ENCODE measurements at regions of chr1 and their contacts with region 1.

Region 1: DNA sequence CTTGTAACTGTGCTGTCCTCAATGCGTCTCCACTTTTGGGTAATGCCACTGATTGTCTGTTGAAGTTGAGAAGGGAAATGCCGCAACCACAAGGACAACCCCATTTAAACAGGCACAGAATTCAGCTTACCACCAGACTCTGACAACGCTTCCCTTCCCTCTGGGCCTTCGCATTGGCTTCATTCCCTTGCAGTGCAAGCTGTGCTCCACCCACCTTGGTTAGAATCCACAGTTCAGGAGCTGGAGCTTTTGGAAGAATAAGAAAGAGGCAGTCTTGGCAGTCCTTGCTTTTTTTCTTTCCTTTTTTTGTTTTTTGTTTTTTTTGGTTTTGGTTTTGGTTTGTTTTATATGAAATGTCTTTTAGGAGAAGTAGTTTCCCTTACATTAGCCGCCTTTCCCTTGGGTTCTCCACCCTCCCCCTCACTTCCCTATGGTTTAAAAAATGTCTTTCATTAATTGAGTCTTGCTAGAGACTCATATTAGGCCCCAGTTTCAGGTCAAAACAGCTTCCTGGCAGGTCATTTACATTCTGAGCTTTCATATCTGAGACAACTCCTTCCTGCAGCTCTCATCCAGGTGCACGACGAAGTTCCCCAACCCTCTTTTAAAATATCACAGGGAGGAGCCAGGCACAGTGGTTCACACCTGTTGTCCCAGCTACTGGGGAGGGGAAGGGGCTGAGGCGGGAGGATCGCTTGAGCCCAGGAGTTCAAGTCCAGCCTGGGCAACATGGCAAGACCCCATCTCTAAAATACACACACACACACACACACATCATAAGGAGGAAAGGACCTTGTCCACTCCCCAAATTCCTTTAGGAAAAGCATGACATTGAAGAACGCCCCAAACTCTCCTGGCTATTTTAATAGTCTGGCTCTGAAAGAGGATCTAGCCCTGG is 20.7 kb upstream of the LAX1 start:
- DNase-seq: peak; percentile 84
- H3K4me3 ChIP-seq: peak overlapping the region; percentile 45
- H3K27ac ChIP-seq: peak overlapping the region; percentile 83
- H3K4me1 ChIP-seq: peaks cover 52% of the 10 kb centered on the region
- CTCF ChIP-seq: no peak

Region 2: GRCh38 chr1:203733009-203733863 is 11.1 kb before region 1 on chr1:
- CTCF ChIA-PET with region 1: interaction called, 7 read pairs
- POLR2A ChIA-PET with region 1: interaction called, 29 read pairs
- intact Hi-C with region 1: no loop called
- DNase-seq: no peak
- H3K4me3 ChIP-seq: no peak overlapping the region
- H3K27ac ChIP-seq: no peak overlapping the region
- H3K4me1 ChIP-seq: peaks cover 5% of the 10 kb centered on the region
- CTCF ChIP-seq: no peak

Region 3: GRCh38 chr1:203754455-203754864 is 10.1 kb after region 1 on chr1:
- CTCF ChIA-PET with region 1: interaction called, 3 read pairs
- POLR2A ChIA-PET with region 1: interaction called, 70 read pairs
- intact Hi-C with region 1: no loop called
- DNase-seq: peak; percentile 88
- H3K4me3 ChIP-seq: peak overlapping the region; percentile 57
- H3K27ac ChIP-seq: peak overlapping the region; percentile 98
- H3K4me1 ChIP-seq: peaks cover 69% of the 10 kb centered on the region
- CTCF ChIP-seq: no peak

Region 4: DNA sequence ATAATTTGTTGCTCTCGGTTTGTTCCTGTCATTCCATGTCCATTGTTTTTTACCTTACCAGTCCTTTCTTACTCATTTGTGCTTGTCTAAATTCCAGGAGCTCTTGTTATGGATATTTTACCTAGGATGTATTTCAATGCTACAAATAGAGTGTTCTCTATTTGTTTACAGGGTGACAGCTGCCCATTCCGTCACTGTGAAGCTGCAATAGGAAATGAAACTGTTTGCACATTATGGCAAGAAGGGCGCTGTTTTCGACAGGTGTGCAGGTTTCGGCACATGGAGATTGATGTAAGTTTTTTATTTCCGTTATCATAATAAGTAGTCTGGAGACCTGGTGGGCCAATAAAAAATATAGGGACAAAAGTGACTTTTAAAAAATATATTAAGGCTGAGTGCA is 74.1 kb after region 1 on chr1:
- CTCF ChIA-PET with region 1: no interaction called
- POLR2A ChIA-PET with region 1: interaction called, 9 read pairs
- intact Hi-C with region 1: loop called (anchors 2 kb)
- DNase-seq: peak; percentile 89
- H3K4me3 ChIP-seq: peak overlapping the region; percentile 47
- H3K27ac ChIP-seq: peak overlapping the region; percentile 93
- H3K4me1 ChIP-seq: peaks cover 39% of the 10 kb centered on the region
- CTCF ChIP-seq: peak; percentile 32; the same call in 1 of the 2 replicates